ENCODE measurements at regions of chr1 and their contacts with region 1.

Region 1: GRCh38 chr1:223683586-223684487 is 18.3 kb upstream of the CAPN8 start:
- H3K4me3 ChIP-seq: no peak overlapping the region
- H3K27ac ChIP-seq: no peak overlapping the region
- H3K4me1 ChIP-seq: no peaks in the 10 kb centered on the region
- CTCF ChIP-seq: peak; percentile 95

Region 2: GRCh38 chr1:223486365-223486764 is 197.5 kb before region 1 on chr1:
- CTCF ChIA-PET with region 1: interaction called, 10 read pairs
- POLR2A ChIA-PET with region 1: no interaction called
- H3K4me3 ChIP-seq: no peak overlapping the region
- H3K27ac ChIP-seq: no peak overlapping the region
- H3K4me1 ChIP-seq: no peaks in the 10 kb centered on the region
- CTCF ChIP-seq: peak; percentile 42; the same call in 1 of the 2 replicates

Region 3: GRCh38 chr1:223531742-223532341 is 152.0 kb before region 1 on chr1:
- CTCF ChIA-PET with region 1: interaction called, 37 read pairs
- POLR2A ChIA-PET with region 1: no interaction called
- H3K4me3 ChIP-seq: no peak overlapping the region
- H3K27ac ChIP-seq: no peak overlapping the region
- H3K4me1 ChIP-seq: no peaks in the 10 kb centered on the region
- CTCF ChIP-seq: peak; percentile 76; the same call in 1 of the 2 replicates

Region 4: GRCh38 chr1:223628233-223629125 is 55.4 kb before region 1 on chr1:
- CTCF ChIA-PET with region 1: interaction called, 17 read pairs
- POLR2A ChIA-PET with region 1: no interaction called
- H3K4me3 ChIP-seq: no peak overlapping the region
- H3K27ac ChIP-seq: no peak overlapping the region
- H3K4me1 ChIP-seq: no peaks in the 10 kb centered on the region
- CTCF ChIP-seq: peak; percentile 54

Region 5: GRCh38 chr1:223695941-223696340 is 12.1 kb after region 1 on chr1:
- CTCF ChIA-PET with region 1: interaction called, 20 read pairs
- POLR2A ChIA-PET with region 1: no interaction called
- H3K4me3 ChIP-seq: no peak overlapping the region
- H3K27ac ChIP-seq: no peak overlapping the region
- H3K4me1 ChIP-seq: peaks cover 3% of the 10 kb centered on the region
- CTCF ChIP-seq: no peak